ENCODE measurements at regions of chr1 and their contacts with region 1.

Region 1: DNA sequence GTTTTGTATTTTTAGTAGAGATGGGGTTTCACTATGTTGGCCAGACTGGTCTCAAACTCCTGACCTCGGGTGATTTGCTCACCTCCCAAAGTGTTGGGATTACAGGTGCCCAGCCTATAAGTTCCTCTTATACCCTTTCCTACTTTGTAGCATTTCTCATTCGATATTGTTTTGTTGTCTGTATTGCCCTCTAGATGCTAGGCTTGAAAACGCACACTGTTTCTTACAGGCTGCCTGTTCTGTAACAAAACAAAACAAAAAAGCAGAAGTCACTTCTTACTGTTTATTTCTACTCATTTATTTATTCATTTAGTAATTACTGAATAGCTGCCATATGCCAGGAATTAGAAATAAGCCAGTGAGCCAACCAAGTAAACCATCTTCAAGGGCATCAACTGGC is 136.9 kb upstream of the BMP8A start:
- DNase-seq: no peak
- ATAC-seq: no peak

Region 2: DNA sequence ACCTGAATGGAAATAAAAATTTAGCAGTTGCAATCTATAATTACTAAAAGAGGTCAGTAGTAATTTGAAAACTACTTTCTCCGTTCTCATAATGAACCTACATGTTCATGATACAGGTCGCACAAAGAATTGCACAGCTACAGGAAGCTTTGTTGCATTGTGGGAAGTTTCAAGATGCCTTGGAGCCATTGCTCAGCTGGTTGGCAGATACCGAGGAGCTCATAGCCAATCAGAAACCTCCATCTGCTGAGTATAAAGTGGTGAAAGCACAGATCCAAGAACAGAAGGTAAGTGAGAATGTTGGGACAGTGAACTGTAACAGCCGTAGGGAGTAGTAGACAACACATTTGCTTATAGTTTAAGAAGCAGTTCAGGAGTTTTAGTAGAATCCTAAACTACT is 68.0 kb after region 1 on chr1:
- intact Hi-C with region 1: loop called in 1 of 2 experiments (anchors 10 kb)
- DNase-seq: no peak
- ATAC-seq: no peak

Region 3: DNA sequence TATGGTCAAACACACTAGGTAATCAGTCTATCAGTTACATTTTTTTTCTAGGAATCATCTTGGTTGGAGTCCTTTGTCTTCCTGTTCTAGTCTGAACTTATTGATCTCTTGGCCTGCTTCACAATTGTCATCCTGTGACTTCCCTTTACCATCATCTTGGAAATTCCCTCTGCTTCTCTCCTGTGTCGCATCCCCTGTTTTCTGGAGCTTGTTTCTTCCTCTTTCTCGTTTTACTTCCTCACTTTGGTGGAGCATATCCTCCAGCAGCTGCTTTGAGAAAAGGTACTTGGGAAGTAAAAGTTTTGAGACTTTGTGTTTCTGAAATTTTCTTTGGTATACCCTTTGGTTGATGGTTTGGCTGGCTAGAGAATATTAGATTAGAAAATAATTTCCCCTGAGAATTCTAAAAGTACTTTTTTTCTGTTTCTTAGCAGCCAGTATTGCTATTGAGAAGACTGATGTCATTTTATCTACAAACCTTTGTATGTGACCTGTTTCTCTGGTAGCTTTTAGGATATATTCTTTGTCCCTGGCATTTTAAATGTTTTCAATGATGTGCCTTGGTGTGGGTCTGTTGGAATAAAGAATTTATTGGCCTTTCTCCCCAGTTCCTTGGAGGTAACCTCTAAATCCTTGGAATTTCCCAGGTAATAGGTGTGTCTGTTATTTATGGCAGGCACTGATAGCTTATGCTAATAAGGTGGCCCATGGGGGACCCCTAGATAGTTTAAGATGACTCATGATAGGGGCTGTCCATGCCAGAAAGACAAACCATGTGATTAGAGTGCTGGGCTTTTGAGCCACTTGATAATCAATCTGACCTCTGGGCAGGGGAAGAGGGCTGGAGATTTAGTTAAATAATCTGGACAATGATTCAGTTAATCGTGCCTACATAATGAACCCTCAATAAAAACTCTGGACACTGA is 553.2 kb after region 1 on chr1:
- intact Hi-C with region 1: no loop called
- DNase-seq: no peak
- ATAC-seq: no peak